ENCODE measurements at regions of chr9 and their contacts with region 1.

Region 1: GRCh38 chr9:109320742-109321448 is at the start of gene EPB41L4B:
- DNase-seq: peak; percentile 72 to 91
- ATAC-seq: peak; percentile 83 to 90
- H3K4me3 ChIP-seq: peak within 1 kb of the TSS; percentile 85
- H3K27ac ChIP-seq: peak within 1 kb of the TSS; percentile 84 to 93
- H3K4me1 ChIP-seq: peaks cover 40% of the 10 kb centered on the region
- CTCF ChIP-seq: peak; percentile 92
- EP300 ChIP-seq: no peak
- POLR2A ChIP-seq: no peak
- RAD21 ChIP-seq: peak; percentile 93 to 99
- polyA plus RNA-seq, gene EPB41L4B: 18.6 and 22.0 TPM in 2 replicates

Region 2: DNA sequence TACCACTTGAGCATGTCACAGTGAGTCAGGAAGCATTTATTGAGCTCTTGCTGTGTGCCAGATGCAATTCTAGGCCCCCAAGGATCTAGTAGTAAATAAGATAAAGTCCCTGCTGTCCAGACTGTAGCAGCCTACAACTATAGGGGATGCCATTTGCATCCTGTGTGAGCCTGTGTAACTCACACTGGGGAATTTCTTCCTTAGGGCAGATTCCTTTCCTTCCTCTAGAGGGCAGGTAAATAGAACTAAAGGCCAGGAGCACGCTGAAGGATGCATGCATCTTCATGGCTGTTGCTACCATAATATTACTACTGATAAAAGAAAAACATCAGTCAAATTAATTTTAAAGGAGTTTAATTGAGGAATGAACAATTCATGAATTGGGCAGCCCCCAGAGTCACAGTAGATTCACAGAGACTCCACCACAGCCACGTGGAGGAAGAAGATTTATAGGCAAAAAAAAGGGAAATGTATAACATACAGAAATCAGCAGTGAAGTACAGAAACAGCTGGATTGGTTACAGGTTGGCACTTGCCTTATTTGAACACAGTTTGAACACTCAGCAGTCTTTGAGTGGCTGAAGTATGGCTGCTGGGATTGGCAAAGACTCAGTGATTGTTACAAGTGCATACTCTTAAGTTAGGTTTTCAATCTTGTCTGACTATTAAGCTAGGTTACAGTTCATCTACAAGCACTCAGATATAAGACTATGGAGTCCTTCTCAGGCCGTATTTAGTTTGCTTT is 564.0 kb before region 1 on chr9:
- CTCF ChIA-PET with region 1: no interaction called
- POLR2A ChIA-PET with region 1: no interaction called
- DNase-seq: peak in 1 of 2 experiments; percentile 22
- ATAC-seq: peak; percentile 76 to 83
- H3K4me3 ChIP-seq: no peak overlapping the region
- H3K27ac ChIP-seq: no peak overlapping the region
- H3K4me1 ChIP-seq: no peaks in the 10 kb centered on the region
- CTCF ChIP-seq: peak; percentile 33; the same call in 2 of the 3 replicates
- EP300 ChIP-seq: no peak
- POLR2A ChIP-seq: no peak
- RAD21 ChIP-seq: peak in 1 of 2 experiments; percentile 20; a peak in 1 of 5 replicates

Region 3: GRCh38 chr9:109244157-109245132 is 76.5 kb before region 1 on chr9:
- CTCF ChIA-PET with region 1: interaction called, 58 read pairs
- POLR2A ChIA-PET with region 1: no interaction called
- DNase-seq: peak; percentile 62 to 72
- ATAC-seq: peak; percentile 91 to 96
- H3K4me3 ChIP-seq: no peak overlapping the region
- H3K27ac ChIP-seq: peak overlapping the region in 1 of 2 experiments; percentile 40; a peak in 1 of 6 replicates
- H3K4me1 ChIP-seq: peaks cover 20% of the 10 kb centered on the region
- CTCF ChIP-seq: peak; percentile 84
- EP300 ChIP-seq: no peak
- POLR2A ChIP-seq: no peak
- RAD21 ChIP-seq: peak; percentile 64 to 75

Region 4: DNA sequence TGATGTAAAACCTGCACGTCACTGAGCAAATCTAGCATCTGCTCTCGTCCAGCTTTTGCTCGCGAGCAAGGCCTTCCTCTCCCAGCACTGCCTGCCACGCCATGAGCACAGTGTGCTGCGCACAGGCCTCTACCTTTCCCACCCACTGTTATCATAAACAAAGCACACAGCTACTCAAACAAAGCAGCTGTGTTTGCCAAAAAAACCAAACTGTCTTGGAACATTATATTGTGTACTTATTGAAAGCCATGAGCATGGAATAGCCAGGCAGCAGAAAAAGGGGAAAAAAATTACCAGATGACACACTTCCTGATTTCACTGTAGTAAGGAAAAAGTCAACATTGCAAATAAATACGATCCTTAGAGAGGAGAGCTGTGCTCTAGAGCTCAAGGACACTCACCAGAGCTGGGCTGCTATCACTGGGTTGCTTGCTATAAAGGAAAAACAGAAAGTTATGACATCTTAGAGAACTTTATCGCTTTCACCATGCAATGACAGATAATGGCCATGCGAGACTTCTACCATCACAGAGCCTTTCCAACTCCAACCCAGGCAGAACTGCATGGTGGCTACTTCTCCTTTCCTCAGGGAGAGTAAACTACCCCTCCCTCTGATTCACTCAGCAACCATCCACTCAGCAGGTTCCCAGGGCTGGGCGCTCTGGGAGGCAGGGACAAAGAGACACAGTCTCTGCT is 69.7 kb before region 1 on chr9:
- CTCF ChIA-PET with region 1: interaction called, 22 read pairs
- POLR2A ChIA-PET with region 1: interaction called, 7 read pairs
- DNase-seq: peak; percentile 72 to 83
- ATAC-seq: peak; percentile 78 to 86
- H3K4me3 ChIP-seq: no peak overlapping the region
- H3K27ac ChIP-seq: peak overlapping the region; percentile 82 to 88
- H3K4me1 ChIP-seq: peaks cover 77% of the 10 kb centered on the region
- CTCF ChIP-seq: no peak
- EP300 ChIP-seq: peak; percentile 13 to 53; a peak in 2 of 5 replicates
- POLR2A ChIP-seq: no peak
- RAD21 ChIP-seq: peak in 1 of 2 experiments; percentile 21; a peak in 2 of 5 replicates

Region 5: GRCh38 chr9:109341565-109341964 is 20.7 kb after region 1 on chr9:
- CTCF ChIA-PET with region 1: interaction called, 10 read pairs
- POLR2A ChIA-PET with region 1: no interaction called
- DNase-seq: no peak
- ATAC-seq: no peak
- H3K4me3 ChIP-seq: no peak overlapping the region
- H3K27ac ChIP-seq: no peak overlapping the region
- H3K4me1 ChIP-seq: no peaks in the 10 kb centered on the region
- CTCF ChIP-seq: no peak
- EP300 ChIP-seq: no peak
- POLR2A ChIP-seq: no peak
- RAD21 ChIP-seq: no peak

Region 6: DNA sequence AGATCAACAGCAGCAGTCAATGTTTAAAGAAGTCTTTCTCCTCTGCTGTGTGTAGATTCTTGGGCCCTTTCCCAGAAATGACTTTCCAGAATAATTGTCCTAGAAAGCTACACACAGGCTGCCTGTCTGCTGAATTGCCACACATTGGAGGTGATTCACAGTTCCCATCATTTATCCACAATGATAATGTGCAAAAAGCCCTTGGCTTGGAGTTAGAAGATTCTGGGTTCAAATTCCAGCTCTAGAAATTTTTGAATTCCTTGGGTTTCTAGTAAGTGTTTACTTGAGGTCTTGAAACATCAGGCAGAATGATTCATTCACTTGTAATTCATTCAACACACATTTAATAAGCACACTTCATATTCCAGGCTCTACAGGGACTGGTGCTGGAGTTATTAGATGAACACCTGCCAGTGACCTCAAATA is 28.5 kb after region 1 on chr9:
- CTCF ChIA-PET with region 1: interaction called, 10 read pairs
- POLR2A ChIA-PET with region 1: interaction called, 3 read pairs
- DNase-seq: peak; percentile 13 to 76
- ATAC-seq: peak; percentile 85 to 88
- H3K4me3 ChIP-seq: no peak overlapping the region
- H3K27ac ChIP-seq: peak overlapping the region in 1 of 2 experiments; percentile 69; a peak in 3 of 6 replicates
- H3K4me1 ChIP-seq: peaks cover 25% of the 10 kb centered on the region
- CTCF ChIP-seq: no peak
- EP300 ChIP-seq: peak in 1 of 2 experiments; percentile 24; a peak in 1 of 5 replicates
- POLR2A ChIP-seq: no peak
- RAD21 ChIP-seq: no peak

Region 7: GRCh38 chr9:109401168-109401989 is 80.5 kb after region 1 on chr9:
- CTCF ChIA-PET with region 1: interaction called, 10 read pairs
- POLR2A ChIA-PET with region 1: no interaction called
- DNase-seq: peak; percentile 67 to 74
- ATAC-seq: peak; percentile 98
- H3K4me3 ChIP-seq: no peak overlapping the region
- H3K27ac ChIP-seq: no peak overlapping the region
- H3K4me1 ChIP-seq: no peaks in the 10 kb centered on the region
- CTCF ChIP-seq: peak; percentile 91
- EP300 ChIP-seq: no peak
- POLR2A ChIP-seq: no peak
- RAD21 ChIP-seq: peak; percentile 78 to 80

Measured in A549 (cell line).